ENCODE measurements at regions of chr12 and their contacts with region 1.

Region 1: GRCh38 chr12:17853054-17853453 is 236.9 kb downstream of the RERGL start:
- DNase-seq: no peak
- H3K4me3 ChIP-seq: no peak overlapping the region
- H3K27ac ChIP-seq: no peak overlapping the region
- H3K4me1 ChIP-seq: no peaks in the 10 kb centered on the region
- H3K27me3 ChIP-seq: no peaks in the 10 kb centered on the region
- CTCF ChIP-seq: no peak

Region 2: GRCh38 chr12:17763366-17763765 is 89.7 kb before region 1 on chr12:
- intact Hi-C with region 1: loop called (anchors 2 kb)
- DNase-seq: no peak
- H3K4me3 ChIP-seq: no peak overlapping the region
- H3K27ac ChIP-seq: no peak overlapping the region
- H3K4me1 ChIP-seq: no peaks in the 10 kb centered on the region
- H3K27me3 ChIP-seq: no peaks in the 10 kb centered on the region
- CTCF ChIP-seq: no peak